ENCODE measurements at regions of chr14 and their contacts with region 1.

Region 1: GRCh38 chr14:95157327-95158189 is at the start of gene DICER1:
- DNase-seq: peak; percentile 91
- H3K4me3 ChIP-seq: peak within 1 kb of the TSS; percentile 68 to 75 (median 75)
- H3K27ac ChIP-seq: peak within 1 kb of the TSS; percentile 84
- H3K4me1 ChIP-seq: peaks cover 12% of the 10 kb centered on the region
- H3K27me3 ChIP-seq: no peaks in the 10 kb centered on the region
- CTCF ChIP-seq: no peak
- total RNA-seq, gene DICER1: 48.4 to 56.0 TPM

Region 2: DNA sequence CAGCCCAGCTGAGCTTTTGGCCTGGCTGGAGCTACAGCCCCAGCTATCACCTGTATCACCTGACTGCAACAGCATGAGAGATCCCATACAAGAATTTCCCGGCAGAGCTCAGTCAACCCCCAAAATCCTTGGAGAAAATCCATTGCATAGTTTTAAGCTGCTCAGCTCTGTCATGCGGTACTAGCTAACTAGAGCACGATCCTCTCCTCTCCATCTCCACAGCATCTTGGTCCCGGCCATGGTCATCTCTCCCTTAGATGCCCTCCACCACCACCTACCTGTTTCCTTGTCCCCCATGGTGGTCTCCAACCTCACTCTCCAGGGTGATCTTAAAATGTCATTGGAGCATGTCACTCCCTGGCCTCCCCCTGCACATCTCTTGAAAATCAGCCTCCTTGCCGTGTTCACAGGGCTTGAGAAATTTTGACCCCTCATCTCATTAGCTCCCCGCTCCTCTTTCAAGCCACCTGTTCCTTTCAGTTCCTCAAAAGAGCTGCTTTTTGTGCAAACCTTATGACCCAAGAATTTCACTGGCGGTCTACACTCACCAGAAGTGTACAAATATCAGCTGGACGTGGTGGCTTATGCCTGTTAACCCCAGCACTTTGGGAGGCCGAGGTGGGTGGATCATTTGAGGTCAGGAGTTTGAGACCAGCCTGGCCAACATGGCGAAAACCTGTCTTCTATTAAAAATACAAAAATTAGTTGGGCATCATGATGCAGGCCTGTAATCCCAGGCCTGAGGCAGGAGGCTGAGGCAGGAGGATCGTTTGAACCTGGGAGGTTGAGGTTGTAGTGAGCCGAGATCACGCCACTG is 170.2 kb after region 1 on chr14:
- CTCF ChIA-PET with region 1: no interaction called
- dilution Hi-C with region 1: no loop called
- in situ Hi-C with region 1: no loop called
- intact Hi-C with region 1: loop called (anchors 5 kb)
- DNase-seq: no peak
- H3K4me3 ChIP-seq: no peak overlapping the region
- H3K27ac ChIP-seq: no peak overlapping the region
- H3K4me1 ChIP-seq: peaks cover 37% of the 10 kb centered on the region
- H3K27me3 ChIP-seq: no peaks in the 10 kb centered on the region
- CTCF ChIP-seq: no peak

Measured in mammary epithelial cell (primary cell).